Common myeloid progenitor, CD34-positive (primary cell): ENCODE measurements at regions of chrX and their contacts with region 1.

Region 1: DNA sequence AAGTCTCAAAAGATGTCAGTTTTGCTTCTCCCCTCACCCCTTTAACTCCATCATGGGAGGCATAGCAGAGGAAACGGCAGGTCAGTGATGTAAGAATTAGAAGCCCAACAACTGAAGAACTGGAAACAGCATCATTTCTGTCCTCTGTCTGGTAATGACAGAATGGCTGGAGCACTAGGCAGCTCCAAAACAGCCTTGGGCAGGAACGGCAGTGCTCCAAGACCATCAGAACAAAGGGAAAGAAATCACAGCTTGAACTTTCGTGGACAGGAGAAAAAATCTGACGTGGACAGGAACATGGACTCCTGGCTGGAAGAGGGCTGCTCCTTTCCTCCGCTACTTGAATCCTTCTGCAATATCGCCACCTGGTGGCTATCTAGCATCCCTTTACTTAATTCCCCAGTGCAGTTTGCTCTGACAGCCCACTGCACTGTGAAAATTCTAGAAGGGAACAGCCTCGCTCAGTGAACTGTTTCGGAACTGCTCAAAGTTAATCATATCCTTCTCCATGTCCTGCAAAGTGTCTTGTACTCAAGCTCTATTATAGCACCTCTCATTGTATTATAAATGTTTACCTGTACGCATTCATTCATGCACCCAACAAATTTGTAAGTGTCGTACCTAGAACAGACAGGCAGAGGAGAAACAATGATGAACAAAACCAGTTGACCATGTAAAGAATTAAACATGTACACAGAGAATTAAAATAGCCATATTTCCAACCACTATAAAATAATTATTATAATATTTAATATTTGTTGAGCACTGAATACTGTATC is 20.4 kb downstream of the SLC25A53 start:
- DNase-seq: peak; percentile 79 to 87 (median 81)
- H3K4me3 ChIP-seq: peak overlapping the region in 1 of 7 experiments; percentile 52
- H3K27ac ChIP-seq: no peak overlapping the region
- H3K4me1 ChIP-seq: peaks cover 0 to 11% (median 0%) of the 10 kb centered on the region in 4 experiments
- H3K27me3 ChIP-seq: no peaks in the 10 kb centered on the region

Region 2: GRCh38 chrX:103845165-103845653 is 291.2 kb before region 1 on chrX:
- CTCF ChIA-PET with region 1: interaction called, 11 read pairs
- POLR2A ChIA-PET with region 1: no interaction called
- DNase-seq: peak; percentile 63 to 76 (median 75)
- H3K4me3 ChIP-seq: peak overlapping the region in 1 of 7 experiments; percentile 16
- H3K27ac ChIP-seq: no peak overlapping the region
- H3K4me1 ChIP-seq: peaks cover 0 to 4% (median 2%) of the 10 kb centered on the region in 4 experiments
- H3K27me3 ChIP-seq: no peaks in the 10 kb centered on the region

Region 3: GRCh38 chrX:104007242-104007641 is 129.2 kb before region 1 on chrX:
- CTCF ChIA-PET with region 1: no interaction called
- POLR2A ChIA-PET with region 1: no interaction called
- DNase-seq: no peak
- H3K4me3 ChIP-seq: no peak overlapping the region
- H3K27ac ChIP-seq: no peak overlapping the region
- H3K4me1 ChIP-seq: no peaks in the 10 kb centered on the region
- H3K27me3 ChIP-seq: peaks cover 0 to 4% (median 1%) of the 10 kb centered on the region in 5 experiments

Region 4: DNA sequence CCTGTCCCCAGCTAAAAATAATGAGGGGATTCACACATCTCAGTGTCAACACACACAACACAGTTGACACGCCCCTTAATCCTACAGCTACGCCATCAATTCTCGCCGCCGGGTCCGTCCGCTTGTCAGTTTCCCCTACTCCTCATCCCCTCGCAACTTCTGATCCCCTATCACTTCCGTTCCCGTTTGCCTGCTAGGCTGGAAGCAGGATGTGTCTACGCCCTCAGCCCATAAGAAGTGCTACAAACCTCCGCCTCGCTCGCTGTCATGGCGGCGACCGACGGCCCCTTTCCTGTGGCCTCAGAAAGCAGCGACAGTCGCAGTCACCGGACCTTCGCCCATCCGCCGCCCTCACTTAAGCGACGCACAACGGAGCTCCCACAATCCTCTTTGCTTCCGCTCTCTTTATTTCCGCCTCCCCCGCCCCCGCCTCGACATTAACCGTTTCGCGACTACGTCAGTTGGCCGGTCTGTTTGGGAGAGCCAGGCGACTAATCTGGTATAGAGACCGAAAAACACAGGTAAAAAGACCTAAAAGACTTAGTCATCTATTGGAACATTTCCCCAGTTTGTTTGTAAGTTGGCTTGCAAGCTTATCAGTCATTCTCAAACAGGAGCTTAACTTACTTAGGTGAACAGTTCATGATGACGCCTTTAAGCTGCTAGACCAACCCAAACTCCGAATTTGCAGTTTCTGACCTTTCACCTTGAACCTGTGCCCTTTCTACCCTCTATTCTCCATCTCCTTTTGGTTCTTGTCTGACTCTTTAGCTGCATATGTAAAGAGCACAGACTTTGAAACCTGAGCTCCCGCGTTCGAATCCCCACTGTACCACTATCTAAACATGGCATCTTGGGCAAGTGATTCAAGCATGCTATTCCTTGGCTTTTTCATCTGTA is 20.4 kb after region 1 on chrX and contains the start of gene SLC25A53:
- CTCF ChIA-PET with region 1: no interaction called
- POLR2A ChIA-PET with region 1: no interaction called
- DNase-seq: peak; percentile 86 to 96 (median 93)
- H3K4me3 ChIP-seq: peak within 1 kb of the TSS; percentile 50 to 91 (median 72)
- H3K27ac ChIP-seq: peak within 1 kb of the TSS; percentile 79 to 93
- H3K4me1 ChIP-seq: peaks cover 0 to 10% (median 3%) of the 10 kb centered on the region in 4 experiments
- H3K27me3 ChIP-seq: no peaks in the 10 kb centered on the region